ENCODE measurements at regions of chr1 and their contacts with region 1.

Region 1: GRCh38 chr1:17531682-17532487 is 7.6 kb upstream of the ARHGEF10L start:
- DNase-seq: peak; percentile 88
- ATAC-seq: peak; percentile 94

Region 2: GRCh38 chr1:17601643-17602382 is 69.9 kb after region 1 on chr1:
- intact Hi-C with region 1: loop called (anchors 2 kb)
- DNase-seq: no peak
- ATAC-seq: no peak

Measured in left ventricle myocardium superior (tissue), 1 donor.